Sigmoid colon (tissue), 7 donors: ENCODE measurements at regions of chr6 and their contacts with region 1.

Region 1: GRCh38 chr6:10510592-10511367 is 10.4 kb upstream of the GCNT2 start:
- DNase-seq: peak; percentile 84
- H3K4me3 ChIP-seq: peak overlapping the region in 3 of 4 donors; percentile 5 to 29 (median 19)
- H3K27ac ChIP-seq: peak overlapping the region; percentile 59 to 75 (median 70)
- H3K4me1 ChIP-seq: peaks cover 0 to 17% (median 10%) of the 10 kb centered on the region in 4 donors
- H3K27me3 ChIP-seq: no peaks in the 10 kb centered on the region
- CTCF ChIP-seq: peak; percentile 47 to 75 (median 56)
- EP300 ChIP-seq: no peak
- POLR2A ChIP-seq: no peak

Region 2: GRCh38 chr6:10555625-10556309 is 45.0 kb after region 1 on chr6:
- intact Hi-C with region 1: loop called (anchors 5 kb)
- DNase-seq: peak; percentile 84
- H3K4me3 ChIP-seq: peak overlapping the region; percentile 41 to 54 (median 50)
- H3K27ac ChIP-seq: peak overlapping the region; percentile 81 to 87 (median 85)
- H3K4me1 ChIP-seq: peaks cover 0 to 59% (median 36%) of the 10 kb centered on the region in 4 donors
- H3K27me3 ChIP-seq: no peaks in the 10 kb centered on the region
- CTCF ChIP-seq: no peak
- EP300 ChIP-seq: no peak
- POLR2A ChIP-seq: peak in 1 of 2 donors; percentile 27

Region 3: DNA sequence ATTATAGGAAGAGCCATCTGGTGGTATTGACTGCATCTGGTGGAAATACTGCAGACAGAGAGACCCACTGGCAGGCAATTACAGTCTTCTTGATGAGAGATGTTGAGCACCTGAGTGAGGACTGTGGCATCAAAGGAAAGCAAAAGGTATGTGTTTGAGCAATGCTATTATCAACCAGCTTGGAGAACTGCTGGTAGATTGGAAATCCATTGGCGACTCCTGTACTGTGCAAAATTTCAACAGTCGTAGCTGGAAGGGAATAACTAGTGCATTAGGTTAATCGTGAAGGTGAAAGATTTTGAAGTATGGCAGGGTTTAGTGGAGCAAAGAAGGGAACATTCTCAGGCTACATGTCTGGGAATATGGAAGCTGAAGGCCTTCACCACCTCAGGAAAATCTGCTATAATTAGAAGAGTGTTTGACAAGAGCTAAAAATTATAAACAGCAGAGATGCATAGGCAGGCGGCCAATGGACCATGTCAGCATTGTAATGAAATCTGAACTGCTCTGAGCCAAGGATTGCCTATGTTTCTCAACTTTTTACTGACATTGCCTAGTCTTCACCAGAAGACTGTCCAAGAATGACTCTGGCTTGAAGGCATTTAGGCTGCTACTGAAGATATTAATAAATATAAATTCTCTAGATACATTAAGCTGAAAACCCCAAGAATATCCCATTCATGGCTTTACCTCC is 99.4 kb after region 1 on chr6:
- intact Hi-C with region 1: loop called (anchors 5 kb)
- DNase-seq: peak; percentile 89
- H3K4me3 ChIP-seq: no peak overlapping the region
- H3K27ac ChIP-seq: peak overlapping the region; percentile 57 to 80 (median 70)
- H3K4me1 ChIP-seq: peaks cover 0 to 56% (median 45%) of the 10 kb centered on the region in 4 donors
- H3K27me3 ChIP-seq: no peaks in the 10 kb centered on the region
- CTCF ChIP-seq: no peak
- EP300 ChIP-seq: no peak
- POLR2A ChIP-seq: no peak

Region 4: DNA sequence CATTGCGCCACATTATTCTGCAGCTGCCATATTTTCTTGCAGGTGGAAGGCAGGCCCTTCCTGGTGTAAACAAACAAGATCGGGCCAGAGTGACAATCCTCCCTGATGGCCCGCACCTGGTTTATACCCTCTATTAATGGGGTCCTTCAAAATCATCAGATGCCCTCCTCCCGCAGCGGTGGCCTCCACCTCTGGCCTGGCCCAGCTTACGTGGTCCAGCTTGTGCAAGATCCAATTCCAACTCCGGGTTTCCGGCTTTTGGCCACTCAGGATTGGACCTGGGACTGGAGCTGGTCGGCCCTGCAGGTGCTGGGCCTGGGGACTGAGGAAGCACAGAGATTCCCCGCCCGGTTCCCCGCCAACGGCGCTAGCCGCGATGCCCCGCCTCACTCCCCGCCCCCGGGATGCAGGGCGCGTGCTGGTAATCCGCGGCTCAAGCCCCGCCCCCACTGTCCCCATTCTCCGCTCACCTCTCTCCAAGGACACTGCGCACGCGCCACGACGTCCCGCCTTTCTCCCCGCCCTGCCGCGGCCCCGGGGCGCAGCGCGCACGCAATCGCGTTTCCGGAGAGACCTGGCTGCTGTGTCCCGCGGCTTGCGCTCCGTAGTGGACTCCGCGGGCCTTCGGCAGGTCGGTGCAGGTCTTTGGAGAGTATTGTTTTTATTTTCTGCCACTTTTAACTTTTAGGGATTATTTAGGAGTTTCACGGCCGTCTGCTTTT is 236.6 kb after region 1 on chr6 and contains the start of gene TMEM14B:
- intact Hi-C with region 1: loop called (anchors 1 kb)
- DNase-seq: peak; percentile 100
- H3K4me3 ChIP-seq: peak within 1 kb of the TSS; percentile 48 to 80 (median 59)
- H3K27ac ChIP-seq: peak within 1 kb of the TSS; percentile 76 to 88 (median 79)
- H3K4me1 ChIP-seq: peaks cover 0 to 32% (median 27%) of the 10 kb centered on the region in 4 donors
- H3K27me3 ChIP-seq: no peaks in the 10 kb centered on the region
- CTCF ChIP-seq: no peak
- EP300 ChIP-seq: peak in 1 of 4 donors; percentile 73
- POLR2A ChIP-seq: peak; percentile 61 to 79
- total RNA-seq, gene TMEM14B: 51.5 to 124 (median 98.2) TPM

Region 5: GRCh38 chr6:10800829-10801535 is 290.2 kb after region 1 on chr6:
- intact Hi-C with region 1: loop called (anchors 1 kb)
- DNase-seq: no peak
- H3K4me3 ChIP-seq: no peak overlapping the region
- H3K27ac ChIP-seq: no peak overlapping the region
- H3K4me1 ChIP-seq: no peaks in the 10 kb centered on the region
- H3K27me3 ChIP-seq: no peaks in the 10 kb centered on the region
- CTCF ChIP-seq: peak; percentile 60 to 94 (median 88)
- EP300 ChIP-seq: no peak
- POLR2A ChIP-seq: no peak